GM23248 (cell line): ENCODE measurements at regions of chr2 and their contacts with region 1.

Region 1: DNA sequence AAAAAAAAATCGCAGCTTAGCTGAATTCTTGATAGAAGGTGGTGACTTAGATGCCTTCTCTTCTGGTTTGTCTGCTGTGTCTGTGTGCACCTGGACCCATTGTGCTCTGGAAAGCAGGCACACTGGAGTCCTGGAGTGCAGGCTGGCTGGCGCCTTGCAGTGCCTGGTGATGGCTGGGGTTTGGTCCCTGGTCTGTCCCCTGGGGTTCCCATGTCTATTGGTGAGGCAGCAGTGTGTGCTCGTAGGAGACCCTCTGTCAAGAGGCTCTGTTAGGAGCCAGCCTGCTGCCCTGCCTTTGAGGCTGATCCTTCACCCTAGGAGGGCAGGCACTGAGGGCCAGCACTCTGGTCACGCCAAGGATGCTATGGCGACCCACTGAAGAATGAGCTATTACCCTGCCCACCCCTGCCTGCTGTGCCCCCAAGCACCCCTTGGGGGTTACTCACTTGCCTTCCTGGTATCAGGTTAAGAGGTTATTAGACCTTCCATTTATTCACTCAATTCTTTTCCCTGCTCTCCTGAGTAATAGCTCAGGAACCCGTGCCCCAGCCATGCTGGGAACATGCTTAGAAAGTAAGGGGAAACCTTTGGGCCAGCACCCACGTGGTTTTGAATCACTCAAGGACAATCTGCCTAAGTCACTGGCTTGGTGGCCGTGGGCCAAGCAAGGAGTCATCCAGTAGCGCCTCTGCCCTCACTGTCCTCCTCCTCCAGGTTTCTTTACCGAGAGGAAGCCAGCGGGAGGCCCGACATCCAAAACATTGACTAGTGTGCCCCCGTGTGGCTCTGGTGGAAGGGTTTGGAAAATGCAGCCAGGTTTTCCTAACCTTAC is 284.5 kb downstream of the PRKCE start:
- DNase-seq: peak; percentile 100
- H3K4me3 ChIP-seq: no peak overlapping the region
- H3K27ac ChIP-seq: peak overlapping the region; percentile 56
- H3K4me1 ChIP-seq: peaks cover 43% of the 10 kb centered on the region
- H3K27me3 ChIP-seq: no peaks in the 10 kb centered on the region

Region 2: DNA sequence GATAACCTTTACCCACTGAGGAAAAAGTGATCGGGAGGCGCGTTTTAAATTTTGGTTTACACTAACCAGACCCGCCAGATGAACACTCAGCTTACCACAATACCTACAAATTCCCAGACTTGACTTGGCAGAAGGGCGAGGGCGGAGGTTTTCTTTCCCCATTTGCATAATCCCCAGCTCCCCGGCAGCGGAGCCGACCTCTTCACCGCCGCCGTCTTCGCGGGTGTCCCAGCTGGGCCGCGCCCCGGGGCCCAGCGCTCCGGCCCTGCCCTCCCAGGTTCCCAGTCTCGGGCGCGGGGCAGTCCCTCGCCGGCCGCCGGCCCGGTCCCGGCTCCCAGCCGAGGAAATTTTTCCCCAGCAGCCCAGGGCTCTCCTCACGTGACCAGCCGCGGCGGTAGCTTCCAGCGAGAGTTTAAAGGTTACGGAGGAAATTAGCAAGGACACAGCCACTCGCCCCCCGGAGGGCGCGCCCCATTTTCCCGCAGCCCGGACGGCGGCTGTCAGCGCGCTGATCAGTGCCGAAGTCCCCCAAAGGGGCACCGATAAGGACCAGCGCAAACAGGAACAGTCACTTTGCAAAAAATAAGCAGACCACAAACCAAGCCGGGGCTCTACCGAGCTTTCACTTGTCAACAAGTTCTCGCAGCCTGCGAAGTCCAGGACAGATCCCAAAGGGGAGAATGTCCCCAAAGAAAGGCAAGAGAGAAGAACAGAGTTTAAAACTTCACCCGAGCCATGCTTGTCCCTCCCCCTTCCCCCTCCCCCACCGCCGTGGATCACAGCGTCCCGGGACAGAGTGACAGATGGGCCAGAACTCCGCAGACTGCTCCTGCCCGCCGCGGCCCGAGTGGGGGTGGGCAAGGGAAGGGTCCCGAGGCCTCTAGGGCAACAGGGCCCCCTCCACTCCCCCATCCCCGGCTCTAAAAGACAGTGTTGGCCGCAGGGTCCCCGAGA is 285.9 kb before region 1 on chr2:
- in situ Hi-C with region 1: loop called (anchors 5 kb)
- DNase-seq: peak; percentile 78
- H3K4me3 ChIP-seq: peak overlapping the region; percentile 95
- H3K27ac ChIP-seq: peak overlapping the region; percentile 83
- H3K4me1 ChIP-seq: peaks cover 13% of the 10 kb centered on the region
- H3K27me3 ChIP-seq: no peaks in the 10 kb centered on the region

Region 3: GRCh38 chr2:46555011-46555410 is 619.0 kb after region 1 on chr2:
- in situ Hi-C with region 1: no loop called
- DNase-seq: no peak
- H3K4me3 ChIP-seq: no peak overlapping the region
- H3K27ac ChIP-seq: no peak overlapping the region
- H3K4me1 ChIP-seq: no peaks in the 10 kb centered on the region
- H3K27me3 ChIP-seq: no peaks in the 10 kb centered on the region